ENCODE measurements at regions of chr6 and their contacts with region 1.

Region 1: GRCh38 chr6:17932330-17932852 is 55.0 kb downstream of the KIF13A start:
- DNase-seq: peak in 1 of 2 donors; percentile 83
- ATAC-seq: peak; percentile 82 to 97 (median 88)
- H3K4me3 ChIP-seq: peak overlapping the region in 2 of 10 donors; percentile 1 to 12
- H3K27ac ChIP-seq: peak overlapping the region; percentile 67 to 93 (median 86)
- H3K4me1 ChIP-seq: peaks cover 15 to 99% (median 85%) of the 10 kb centered on the region in 9 donors
- H3K27me3 ChIP-seq: no peaks in the 10 kb centered on the region
- CTCF ChIP-seq: no peak

Region 2: DNA sequence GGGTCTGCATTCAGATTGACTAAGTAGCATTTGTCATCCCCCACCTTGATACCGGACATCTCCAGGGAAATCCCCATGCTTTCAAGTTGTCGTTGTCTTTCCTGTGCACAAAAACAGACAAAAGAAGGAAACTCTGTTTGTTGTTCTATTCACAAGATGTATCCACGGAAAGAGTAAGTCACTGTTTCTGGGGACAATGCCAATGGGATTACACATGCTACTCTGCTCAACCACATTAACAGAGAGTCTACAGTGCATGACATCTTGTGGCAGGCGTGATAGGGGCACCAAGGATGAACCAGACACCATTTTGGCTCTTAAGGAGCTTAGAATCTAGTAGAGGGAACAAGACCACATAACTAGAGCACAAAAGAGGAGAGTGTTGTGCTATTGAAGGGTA is 101.3 kb before region 1 on chr6:
- intact Hi-C with region 1: loop called in 2 of 10 experiments (anchors 5 to 10 kb)
- DNase-seq: peak in 1 of 2 donors; percentile 54
- ATAC-seq: peak; percentile 67 to 92 (median 88)
- H3K4me3 ChIP-seq: no peak overlapping the region
- H3K27ac ChIP-seq: peak overlapping the region in 5 of 10 donors; percentile 20 to 66 (median 41)
- H3K4me1 ChIP-seq: peaks cover 0 to 17% (median 11%) of the 10 kb centered on the region in 9 donors
- H3K27me3 ChIP-seq: no peaks in the 10 kb centered on the region
- CTCF ChIP-seq: peak in 1 of 9 donors; percentile 10

Region 3: GRCh38 chr6:17865798-17866725 is 66.3 kb before region 1 on chr6:
- intact Hi-C with region 1: loop called in 1 of 10 experiments (anchors 5 kb)
- DNase-seq: peak; percentile 40 to 74
- ATAC-seq: peak; percentile 61 to 96 (median 90)
- H3K4me3 ChIP-seq: no peak overlapping the region
- H3K27ac ChIP-seq: peak overlapping the region in 9 of 10 donors; percentile 20 to 79 (median 63)
- H3K4me1 ChIP-seq: peaks cover 14 to 83% (median 69%) of the 10 kb centered on the region in 9 donors
- H3K27me3 ChIP-seq: no peaks in the 10 kb centered on the region
- CTCF ChIP-seq: no peak

Region 4: DNA sequence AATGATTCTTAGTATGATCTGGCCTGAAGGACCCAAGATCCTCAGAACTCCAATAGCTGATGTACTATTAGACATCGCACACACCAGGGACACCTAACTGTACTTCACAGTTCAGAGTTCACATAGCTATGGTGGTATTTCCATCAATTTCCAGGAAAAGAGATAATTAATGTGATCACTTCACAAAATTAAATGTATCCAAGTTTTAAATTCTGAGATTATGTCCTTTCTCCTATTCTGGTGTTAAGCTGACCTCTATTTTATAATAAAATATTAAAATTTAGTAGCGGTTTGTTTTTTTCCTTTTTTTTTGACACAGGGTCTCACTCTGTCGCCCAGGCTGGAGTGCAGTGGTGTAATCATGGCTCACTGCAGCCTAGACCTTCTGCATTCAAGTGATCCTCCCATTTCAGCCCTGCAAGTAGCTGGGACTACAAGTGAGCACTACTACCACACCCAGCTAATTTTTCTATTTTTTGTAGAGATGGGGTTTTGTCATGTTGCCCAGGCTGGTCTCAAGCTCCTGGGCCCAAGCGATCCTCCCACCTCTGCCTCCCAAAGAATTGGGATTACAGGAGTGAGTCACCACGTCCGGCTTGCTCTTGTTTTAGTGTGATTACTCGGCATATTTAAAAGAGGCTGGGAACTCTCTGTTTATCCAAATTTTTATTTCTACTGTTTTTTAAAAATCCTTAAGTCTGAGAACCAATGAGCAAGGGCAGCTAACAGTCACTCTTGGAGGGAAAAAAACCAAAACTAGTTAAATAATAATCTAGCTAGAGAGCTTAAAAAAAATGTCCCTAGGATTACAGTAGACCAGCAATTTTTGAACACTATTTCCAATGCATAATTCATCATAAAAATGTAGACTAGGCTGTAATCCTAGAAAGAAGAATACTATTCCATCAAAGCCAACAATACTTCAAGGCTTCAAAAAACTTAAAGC is 39.0 kb after region 1 on chr6:
- intact Hi-C with region 1: loop called in 4 of 10 experiments (anchors 5 kb)
- DNase-seq: peak in 1 of 2 donors; percentile 13
- ATAC-seq: peak in 5 of 8 donors; percentile 31 to 72 (median 40)
- H3K4me3 ChIP-seq: peak overlapping the region in 2 of 10 donors; percentile 3 to 34
- H3K27ac ChIP-seq: peak overlapping the region in 9 of 10 donors; percentile 22 to 84 (median 65)
- H3K4me1 ChIP-seq: peaks cover 21 to 88% (median 79%) of the 10 kb centered on the region in 9 donors
- H3K27me3 ChIP-seq: no peaks in the 10 kb centered on the region
- CTCF ChIP-seq: no peak

Measured in heart right ventricle (tissue), 16 donors.